ENCODE measurements at regions of chr10 and their contacts with region 1.

Region 1: DNA sequence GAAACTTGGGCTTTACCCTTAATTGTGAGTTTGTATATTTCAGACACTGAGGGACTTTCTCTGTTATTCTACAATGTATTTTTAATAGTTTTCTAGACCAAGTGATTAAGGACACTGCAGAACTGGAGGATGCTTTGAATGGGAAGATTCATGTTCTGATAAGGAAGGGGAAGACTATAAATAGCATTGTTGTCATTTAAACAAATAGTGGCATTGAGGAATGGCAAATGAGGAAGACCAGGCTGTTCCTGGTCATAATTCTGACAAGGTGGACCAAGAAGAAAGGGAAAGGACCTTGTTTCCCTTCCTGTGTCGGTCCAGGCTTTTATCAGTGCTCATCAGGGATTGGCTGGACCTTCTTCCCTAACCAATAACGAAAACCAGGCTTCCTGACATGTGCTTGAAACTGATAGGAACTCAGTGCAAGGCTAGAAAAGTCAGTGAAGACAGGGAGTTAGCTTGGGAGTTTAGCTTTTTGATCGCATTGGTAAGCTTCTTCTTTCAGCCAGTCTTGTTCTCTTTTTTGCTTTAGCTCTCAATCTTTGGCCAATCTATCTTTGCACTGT is 116.2 kb downstream of the ITGA8 start:
- DNase-seq: no peak
- ATAC-seq: no peak
- H3K4me3 ChIP-seq: no peak overlapping the region
- H3K27ac ChIP-seq: peak overlapping the region; percentile 8 to 15
- H3K4me1 ChIP-seq: peaks cover 0 to 5% of the 10 kb centered on the region in 2 donors
- H3K27me3 ChIP-seq: no peaks in the 10 kb centered on the region

Region 2: GRCh38 chr10:15652117-15652516 is 48.6 kb after region 1 on chr10:
- intact Hi-C with region 1: loop called in 1 of 2 experiments (anchors 5 kb)
- DNase-seq: no peak
- ATAC-seq: no peak
- H3K4me3 ChIP-seq: no peak overlapping the region
- H3K27ac ChIP-seq: peak overlapping the region in 1 of 2 donors; percentile 80
- H3K4me1 ChIP-seq: no peaks in the 10 kb centered on the region
- H3K27me3 ChIP-seq: no peaks in the 10 kb centered on the region

Measured in aorta (tissue), 5 donors.